ENCODE measurements at regions of chr3 and their contacts with region 1.

Region 1: GRCh38 chr3:39189959-39190269 is 2.5 kb downstream of the XIRP1 start:
- DNase-seq: peak; percentile 66
- H3K4me3 Mint-ChIP-seq: no peak overlapping the region
- H3K27ac Mint-ChIP-seq: peak overlapping the region; percentile 43
- H3K4me1 Mint-ChIP-seq: peaks cover 8% of the 10 kb centered on the region
- H3K27me3 Mint-ChIP-seq: no peaks in the 10 kb centered on the region

Region 2: GRCh38 chr3:39126532-39127071 is 63.3 kb before region 1 on chr3:
- CTCF ChIA-PET with region 1: interaction called, 13 read pairs
- POLR2A ChIA-PET with region 1: no interaction called
- DNase-seq: peak; percentile 48
- H3K4me3 Mint-ChIP-seq: no peak overlapping the region
- H3K27ac Mint-ChIP-seq: no peak overlapping the region
- H3K4me1 Mint-ChIP-seq: peaks cover 22% of the 10 kb centered on the region
- H3K27me3 Mint-ChIP-seq: peaks cover 14% of the 10 kb centered on the region

Region 3: GRCh38 chr3:39378088-39378487 is 188.2 kb after region 1 on chr3:
- CTCF ChIA-PET with region 1: interaction called, 10 read pairs
- POLR2A ChIA-PET with region 1: no interaction called
- DNase-seq: peak; percentile 75
- H3K4me3 Mint-ChIP-seq: no peak overlapping the region
- H3K27ac Mint-ChIP-seq: no peak overlapping the region
- H3K4me1 Mint-ChIP-seq: peaks cover 20% of the 10 kb centered on the region
- H3K27me3 Mint-ChIP-seq: peaks cover 5% of the 10 kb centered on the region

Measured in activated CD4-positive, alpha-beta T cell treated with anti-CD3 and anti-CD28 coated beads, Interleukin-2, amount 10 ng/mL, durations not matched to agents 7 days and 5 days (primary cell).